ENCODE measurements at regions of chr5 and their contacts with region 1.

Region 1: DNA sequence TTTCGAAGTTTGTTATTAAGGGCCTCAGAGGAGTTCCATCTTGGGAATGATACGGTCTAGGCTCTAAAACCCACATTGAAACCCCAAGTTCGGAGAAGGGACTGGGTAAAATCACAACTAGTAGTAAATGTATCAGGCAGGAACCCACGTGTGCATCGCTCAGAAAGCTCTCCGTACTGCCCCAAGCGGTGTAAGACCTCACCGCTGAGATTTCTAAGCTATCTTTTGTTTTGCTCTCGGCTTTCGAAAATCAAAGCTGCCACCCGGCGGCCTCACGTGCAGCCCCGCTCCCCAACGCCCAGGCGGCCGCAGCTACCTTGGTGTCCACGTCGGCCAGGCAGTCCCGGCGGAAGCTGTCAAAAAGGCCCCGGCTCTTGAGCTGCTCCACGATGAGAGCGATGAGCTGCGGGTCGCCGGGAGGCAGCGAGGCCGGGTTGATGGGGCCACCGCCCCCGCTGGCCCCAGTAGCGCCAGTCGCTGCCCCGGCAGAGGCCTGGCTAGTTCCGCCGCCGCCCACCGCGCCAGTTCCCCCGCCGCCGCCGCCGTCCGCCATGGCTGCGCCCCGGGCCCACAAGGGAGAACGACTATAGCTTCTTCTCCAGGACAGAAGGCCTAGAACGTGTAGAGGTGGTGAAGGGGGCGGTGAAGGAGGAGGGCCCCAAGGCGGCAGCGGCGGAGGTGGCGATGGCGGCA is 420 bp downstream of the BOD1 start:
- DNase-seq: peak; percentile 81
- H3K4me3 ChIP-seq: peak overlapping the region; percentile 69 to 86 (median 82)
- H3K27ac ChIP-seq: peak overlapping the region; percentile 85
- H3K4me1 ChIP-seq: peaks cover 28% of the 10 kb centered on the region
- H3K27me3 ChIP-seq: no peaks in the 10 kb centered on the region
- CTCF ChIP-seq: peak; percentile 67 to 75
- POLR2A ChIP-seq: peak; percentile 15

Region 2: GRCh38 chr5:172707285-172708182 is 908.5 kb before region 1 on chr5:
- CTCF ChIA-PET with region 1: interaction called, 15 read pairs
- POLR2A ChIA-PET with region 1: no interaction called
- dilution Hi-C with region 1: no loop called
- intact Hi-C with region 1: no loop called
- DNase-seq: peak; percentile 62
- H3K4me3 ChIP-seq: no peak overlapping the region
- H3K27ac ChIP-seq: no peak overlapping the region
- H3K4me1 ChIP-seq: no peaks in the 10 kb centered on the region
- H3K27me3 ChIP-seq: no peaks in the 10 kb centered on the region
- CTCF ChIP-seq: peak; percentile 61 to 64
- POLR2A ChIP-seq: no peak

Region 3: DNA sequence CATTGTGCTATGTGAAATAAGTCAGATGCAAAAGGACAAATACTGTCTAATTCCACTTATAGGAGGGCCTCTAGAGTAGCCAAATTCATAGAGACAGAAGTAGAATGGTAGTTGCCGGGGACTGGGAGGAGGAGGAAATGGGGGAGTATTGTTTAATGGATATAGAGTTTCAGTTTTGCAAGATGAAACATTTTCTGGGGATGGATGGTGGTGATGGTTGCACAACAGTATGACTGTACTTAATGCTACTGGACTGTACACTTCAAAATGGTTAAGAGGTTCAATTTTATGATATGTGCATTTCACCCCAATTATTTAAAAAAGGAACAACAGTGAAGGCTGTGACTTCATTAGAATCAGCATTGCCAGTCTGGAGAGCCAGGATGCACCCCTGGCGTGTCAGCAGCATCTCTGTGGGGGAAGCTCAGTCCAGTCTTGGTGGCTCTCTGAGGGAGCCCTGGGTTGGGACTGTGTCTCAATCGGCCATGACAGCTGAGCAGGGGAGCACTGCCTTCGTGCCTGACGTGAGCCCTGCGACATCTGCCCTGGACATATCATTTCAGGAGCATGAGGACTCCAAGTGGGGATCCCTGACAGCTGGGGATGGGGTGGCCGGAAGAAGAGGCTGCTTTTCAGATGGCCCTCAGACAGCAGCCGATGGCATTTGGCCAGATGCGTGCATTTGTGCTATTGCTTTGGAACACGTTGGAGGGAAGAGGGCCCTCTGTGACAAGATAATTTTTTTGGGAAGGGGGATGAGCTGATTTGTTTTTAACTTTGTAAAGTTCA is 157.0 kb before region 1 on chr5:
- CTCF ChIA-PET with region 1: no interaction called
- POLR2A ChIA-PET with region 1: no interaction called
- dilution Hi-C with region 1: no loop called
- intact Hi-C with region 1: no loop called
- DNase-seq: no peak
- H3K4me3 ChIP-seq: no peak overlapping the region
- H3K27ac ChIP-seq: no peak overlapping the region
- H3K4me1 ChIP-seq: peaks cover 23% of the 10 kb centered on the region
- H3K27me3 ChIP-seq: no peaks in the 10 kb centered on the region
- CTCF ChIP-seq: no peak
- POLR2A ChIP-seq: no peak

Region 4: GRCh38 chr5:173581408-173582215 is 34.4 kb before region 1 on chr5:
- CTCF ChIA-PET with region 1: interaction called, 11 read pairs
- POLR2A ChIA-PET with region 1: no interaction called
- dilution Hi-C with region 1: no loop called
- intact Hi-C with region 1: no loop called
- DNase-seq: peak; percentile 33
- H3K4me3 ChIP-seq: no peak overlapping the region
- H3K27ac ChIP-seq: no peak overlapping the region
- H3K4me1 ChIP-seq: no peaks in the 10 kb centered on the region
- H3K27me3 ChIP-seq: peaks cover 2 to 6% of the 10 kb centered on the region in 2 experiments
- CTCF ChIP-seq: peak; percentile 75 to 87
- POLR2A ChIP-seq: no peak

Region 5: GRCh38 chr5:173887610-173888472 is 271.8 kb after region 1 on chr5 and contains the start of gene CPEB4:
- CTCF ChIA-PET with region 1: interaction called, 11 read pairs
- POLR2A ChIA-PET with region 1: interaction called, 5 read pairs
- dilution Hi-C with region 1: no loop called
- intact Hi-C with region 1: loop called (anchors 1 kb)
- DNase-seq: peak; percentile 99
- H3K4me3 ChIP-seq: peak within 1 kb of the TSS; percentile 76 to 84 (median 79)
- H3K27ac ChIP-seq: peak within 1 kb of the TSS; percentile 82
- H3K4me1 ChIP-seq: peaks cover 42% of the 10 kb centered on the region
- H3K27me3 ChIP-seq: no peaks in the 10 kb centered on the region
- CTCF ChIP-seq: no peak
- POLR2A ChIP-seq: peak; percentile 89
- total RNA-seq, gene CPEB4: 16.4 and 18.1 TPM in 2 replicates

Region 6: GRCh38 chr5:173972925-173973615 is 357.0 kb after region 1 on chr5:
- CTCF ChIA-PET with region 1: interaction called, 150 read pairs
- POLR2A ChIA-PET with region 1: interaction called, 3 read pairs
- dilution Hi-C with region 1: no loop called
- intact Hi-C with region 1: loop called (anchors 1 kb)
- DNase-seq: peak; percentile 82
- H3K4me3 ChIP-seq: peak overlapping the region; percentile 36 to 59 (median 52)
- H3K27ac ChIP-seq: no peak overlapping the region
- H3K4me1 ChIP-seq: peaks cover 6% of the 10 kb centered on the region
- H3K27me3 ChIP-seq: peaks cover 0 to 2% of the 10 kb centered on the region in 2 experiments
- CTCF ChIP-seq: peak; percentile 83 to 87
- POLR2A ChIP-seq: no peak

Region 7: GRCh38 chr5:174418928-174419796 is 803.1 kb after region 1 on chr5:
- CTCF ChIA-PET with region 1: no interaction called
- POLR2A ChIA-PET with region 1: no interaction called
- dilution Hi-C with region 1: no loop called
- intact Hi-C with region 1: loop called (anchors 5 kb)
- DNase-seq: peak; percentile 43
- H3K4me3 ChIP-seq: no peak overlapping the region
- H3K27ac ChIP-seq: no peak overlapping the region
- H3K4me1 ChIP-seq: no peaks in the 10 kb centered on the region
- H3K27me3 ChIP-seq: no peaks in the 10 kb centered on the region
- CTCF ChIP-seq: peak; percentile 66 to 80
- POLR2A ChIP-seq: no peak

Measured in endothelial cell of umbilical vein (primary cell).